CD8-positive, alpha-beta T cell (primary cell): ENCODE measurements at regions of chr1 and their contacts with region 1.

Region 1: DNA sequence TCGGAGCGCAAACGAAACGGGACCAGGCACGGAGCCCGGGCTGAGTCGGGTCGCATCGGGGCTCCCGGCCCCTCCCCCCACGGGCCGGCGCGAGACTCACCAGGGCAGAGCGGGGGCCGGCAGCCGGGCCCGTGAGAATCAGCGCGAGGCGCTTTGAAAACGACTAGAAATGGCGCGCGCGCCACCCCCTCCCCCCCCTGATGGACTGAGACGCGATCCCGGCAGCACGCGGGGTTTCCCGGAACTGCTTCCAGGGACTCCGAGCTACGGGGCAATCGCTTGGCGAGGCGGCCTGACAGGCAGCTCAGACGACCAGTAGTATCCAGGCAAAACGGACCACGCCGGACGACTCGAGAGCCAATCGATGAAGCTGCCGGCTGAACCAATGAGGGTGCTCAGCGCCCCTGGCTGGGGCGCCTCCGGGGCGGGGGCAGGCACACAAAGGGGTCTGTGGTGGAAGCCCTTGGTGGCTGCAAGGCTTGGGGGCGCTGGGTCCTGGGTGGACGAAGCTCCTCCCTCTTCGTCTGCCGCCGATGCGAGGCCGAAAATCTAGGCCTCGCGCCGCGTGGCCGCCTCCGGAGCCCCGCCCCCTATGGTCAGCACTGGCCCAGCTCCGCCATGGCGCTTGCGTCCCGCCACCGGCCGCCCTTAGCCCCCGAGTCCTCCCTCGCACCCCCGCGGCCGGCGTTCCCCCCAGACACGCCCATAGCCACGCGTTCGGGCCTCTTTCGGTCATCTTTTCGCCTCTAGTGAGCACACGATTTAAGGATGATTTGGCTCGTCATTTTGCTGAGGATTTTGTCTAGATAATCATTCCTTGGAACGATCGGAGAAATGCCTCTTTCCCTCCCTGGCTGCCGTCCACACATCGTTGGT is at the start of gene HNRNPR:
- DNase-seq: peak; percentile 97 to 100 (median 99)
- ATAC-seq: peak; percentile 96
- H3K4me3 ChIP-seq: peak within 1 kb of the TSS; percentile 70 to 93
- H3K4me3 Mint-ChIP-seq: peak within 1 kb of the TSS; percentile 94
- H3K27ac ChIP-seq: peak within 1 kb of the TSS; percentile 66 to 78
- H3K27ac Mint-ChIP-seq: peak within 1 kb of the TSS; percentile 96
- H3K4me1 ChIP-seq: peaks cover 31% of the 10 kb centered on the region
- H3K4me1 Mint-ChIP-seq: peaks cover 42% of the 10 kb centered on the region
- H3K27me3 ChIP-seq: no peaks in the 10 kb centered on the region
- H3K27me3 Mint-ChIP-seq: no peaks in the 10 kb centered on the region
- CTCF ChIP-seq: no peak
- total RNA-seq, gene HNRNPR: 102 to 103 TPM

Region 2: DNA sequence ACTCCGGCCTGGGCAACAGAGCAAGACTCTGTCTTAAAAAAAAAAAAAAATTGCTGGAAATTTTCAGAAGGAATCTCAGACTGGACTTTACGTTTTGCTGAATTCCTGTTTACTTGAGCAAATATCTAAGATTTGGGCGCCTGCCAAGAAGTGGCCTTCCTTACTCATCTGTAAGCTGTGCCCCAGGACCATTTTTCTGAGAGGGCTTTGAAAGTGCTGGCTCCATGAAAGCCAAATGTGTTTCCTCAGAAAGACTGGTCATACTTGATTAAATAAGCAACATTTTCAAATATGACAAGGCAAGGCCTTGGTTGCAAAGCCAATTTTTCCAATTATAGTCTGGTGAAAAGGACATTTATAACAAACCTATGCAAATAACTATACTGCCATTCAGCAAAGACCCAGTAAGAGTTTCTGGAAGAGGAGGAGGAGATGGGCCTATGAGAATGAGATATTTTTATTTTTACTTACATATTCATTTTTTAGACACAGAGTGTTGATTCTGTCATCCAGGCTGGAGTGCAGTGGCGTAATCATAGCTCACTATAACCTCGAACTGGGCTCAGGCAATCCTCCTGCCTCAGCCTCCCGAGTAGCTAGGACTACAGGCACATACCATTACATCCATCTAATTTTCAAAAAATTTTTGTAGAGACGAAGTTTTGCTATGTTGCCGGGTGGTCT is 70.8 kb before region 1 on chr1:
- CTCF ChIA-PET with region 1: no interaction called
- POLR2A ChIA-PET with region 1: no interaction called
- intact Hi-C with region 1: no loop called
- DNase-seq: no peak
- ATAC-seq: no peak
- H3K4me3 ChIP-seq: no peak overlapping the region
- H3K4me3 Mint-ChIP-seq: no peak overlapping the region
- H3K27ac ChIP-seq: no peak overlapping the region
- H3K27ac Mint-ChIP-seq: no peak overlapping the region
- H3K4me1 ChIP-seq: no peaks in the 10 kb centered on the region
- H3K4me1 Mint-ChIP-seq: no peaks in the 10 kb centered on the region
- H3K27me3 ChIP-seq: peaks cover 4 to 11% of the 10 kb centered on the region in 2 experiments
- H3K27me3 Mint-ChIP-seq: peaks cover 32% of the 10 kb centered on the region
- CTCF ChIP-seq: no peak

Region 3: GRCh38 chr1:23330846-23331245 is 13.5 kb before region 1 on chr1:
- CTCF ChIA-PET with region 1: interaction called, 3 read pairs
- POLR2A ChIA-PET with region 1: interaction called, 12 read pairs
- intact Hi-C with region 1: no loop called
- DNase-seq: no peak
- ATAC-seq: no peak
- H3K4me3 ChIP-seq: no peak overlapping the region
- H3K4me3 Mint-ChIP-seq: no peak overlapping the region
- H3K27ac ChIP-seq: no peak overlapping the region
- H3K27ac Mint-ChIP-seq: peak overlapping the region; percentile 21
- H3K4me1 ChIP-seq: no peaks in the 10 kb centered on the region
- H3K4me1 Mint-ChIP-seq: peaks cover 34% of the 10 kb centered on the region
- H3K27me3 ChIP-seq: no peaks in the 10 kb centered on the region
- H3K27me3 Mint-ChIP-seq: no peaks in the 10 kb centered on the region
- CTCF ChIP-seq: no peak

Region 4: DNA sequence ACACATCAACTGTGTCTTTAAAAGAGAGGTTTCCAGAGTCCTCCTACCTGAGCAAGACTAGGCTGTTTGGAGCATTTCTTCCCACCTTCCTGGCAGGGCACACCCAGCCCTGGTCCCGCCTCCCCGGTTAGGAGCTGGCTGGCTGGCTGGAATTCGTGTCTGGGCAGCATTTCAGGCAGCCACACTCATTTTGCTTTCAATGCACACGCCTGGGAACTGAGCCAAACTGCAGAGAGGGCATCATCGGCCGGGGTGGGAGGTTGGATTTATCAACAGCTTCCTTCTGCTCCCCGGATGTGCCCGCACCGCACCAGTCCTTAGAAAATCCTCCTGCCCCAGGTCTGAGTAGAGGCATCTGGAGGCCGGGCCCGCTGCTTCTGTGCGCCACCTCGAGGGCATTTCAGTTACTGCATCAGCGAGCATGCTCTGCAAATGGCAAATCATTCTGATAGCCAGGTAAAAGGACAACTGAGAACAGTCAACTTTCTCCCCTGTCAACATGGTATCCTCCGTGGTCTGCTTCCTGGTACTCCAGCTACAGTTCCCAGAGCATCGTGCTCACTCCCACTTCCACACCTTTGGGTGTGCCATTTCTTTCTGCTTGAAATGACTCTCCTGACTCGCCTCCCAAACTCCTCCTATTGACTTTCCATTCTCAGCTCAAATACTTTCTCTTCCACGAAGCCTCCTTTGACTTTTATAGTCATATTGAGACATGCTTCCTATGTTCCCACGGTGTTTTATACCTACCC is 59.6 kb after region 1 on chr1:
- CTCF ChIA-PET with region 1: interaction called, 6 read pairs
- POLR2A ChIA-PET with region 1: no interaction called
- intact Hi-C with region 1: loop called (anchors 1 to 5 kb)
- DNase-seq: peak; percentile 69 to 88 (median 78)
- ATAC-seq: peak; percentile 100
- H3K4me3 ChIP-seq: no peak overlapping the region
- H3K4me3 Mint-ChIP-seq: no peak overlapping the region
- H3K27ac ChIP-seq: no peak overlapping the region
- H3K27ac Mint-ChIP-seq: no peak overlapping the region
- H3K4me1 ChIP-seq: peaks cover 4% of the 10 kb centered on the region
- H3K4me1 Mint-ChIP-seq: peaks cover 9% of the 10 kb centered on the region
- H3K27me3 ChIP-seq: no peaks in the 10 kb centered on the region
- H3K27me3 Mint-ChIP-seq: no peaks in the 10 kb centered on the region
- CTCF ChIP-seq: peak; percentile 87

Region 5: DNA sequence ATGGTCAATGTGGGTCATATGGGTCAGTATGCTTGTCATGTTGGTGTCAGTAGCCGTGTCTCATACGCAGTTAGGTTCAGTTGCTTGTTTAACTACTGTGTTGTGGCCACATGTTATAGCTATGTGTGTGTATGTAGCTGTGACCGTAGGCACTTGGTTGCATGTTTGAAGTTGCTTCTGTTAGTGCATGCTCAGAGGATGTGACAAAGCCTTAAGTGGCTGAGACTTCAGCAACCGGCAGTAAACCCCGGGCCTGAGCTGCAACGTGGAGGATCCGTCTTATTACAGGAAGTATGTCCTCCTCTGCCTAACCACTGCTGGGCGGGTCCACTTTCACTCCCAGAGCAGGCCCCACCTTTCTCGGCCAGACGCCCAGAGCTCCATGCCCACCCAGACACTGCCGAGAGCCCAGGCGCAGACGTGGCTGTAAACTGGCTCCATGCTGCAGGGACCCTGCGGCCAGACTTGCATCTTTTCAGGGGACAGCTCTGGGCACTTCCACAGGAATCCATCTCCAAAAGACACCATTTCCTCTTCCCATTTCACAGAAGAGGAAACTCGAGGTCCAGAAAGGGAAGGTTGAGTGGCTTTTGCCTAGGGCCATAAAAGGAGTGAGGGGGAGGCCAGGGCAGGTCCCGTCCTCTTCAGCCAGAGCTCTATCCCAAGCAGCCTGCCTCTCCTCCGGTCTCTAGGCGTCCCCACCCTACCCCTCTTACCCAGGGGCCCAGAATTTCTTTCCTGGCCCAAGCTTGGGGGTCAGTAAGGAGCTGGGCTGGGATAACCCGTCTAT is 78.1 kb after region 1 on chr1:
- CTCF ChIA-PET with region 1: no interaction called
- POLR2A ChIA-PET with region 1: interaction called, 12 read pairs
- intact Hi-C with region 1: no loop called
- DNase-seq: peak in 8 of 9 experiments; percentile 37 to 80 (median 55)
- ATAC-seq: peak; percentile 77
- H3K4me3 ChIP-seq: peak overlapping the region in 1 of 2 experiments; percentile 21
- H3K4me3 Mint-ChIP-seq: peak overlapping the region; percentile 89
- H3K27ac ChIP-seq: peak overlapping the region in 1 of 2 experiments; percentile 43
- H3K27ac Mint-ChIP-seq: peak overlapping the region; percentile 76
- H3K4me1 ChIP-seq: peaks cover 32% of the 10 kb centered on the region
- H3K4me1 Mint-ChIP-seq: peaks cover 36% of the 10 kb centered on the region
- H3K27me3 ChIP-seq: no peaks in the 10 kb centered on the region
- H3K27me3 Mint-ChIP-seq: peaks cover 3% of the 10 kb centered on the region
- CTCF ChIP-seq: no peak

Region 6: GRCh38 chr1:23530747-23531561 is 186.6 kb after region 1 on chr1 and contains the start of gene E2F2:
- CTCF ChIA-PET with region 1: interaction called, 3 read pairs
- POLR2A ChIA-PET with region 1: interaction called, 5 read pairs
- intact Hi-C with region 1: loop called (anchors 2 to 10 kb)
- DNase-seq: peak; percentile 56 to 91 (median 82)
- ATAC-seq: peak; percentile 71
- H3K4me3 ChIP-seq: peak within 1 kb of the TSS; percentile 42 to 52
- H3K4me3 Mint-ChIP-seq: peak within 1 kb of the TSS; percentile 85
- H3K27ac ChIP-seq: peak within 1 kb of the TSS in 1 of 2 experiments; percentile 72
- H3K27ac Mint-ChIP-seq: peak within 1 kb of the TSS; percentile 13
- H3K4me1 ChIP-seq: peaks cover 60% of the 10 kb centered on the region
- H3K4me1 Mint-ChIP-seq: peaks cover 63% of the 10 kb centered on the region
- H3K27me3 ChIP-seq: no peaks in the 10 kb centered on the region
- H3K27me3 Mint-ChIP-seq: no peaks in the 10 kb centered on the region
- CTCF ChIP-seq: no peak
- total RNA-seq, gene E2F2: 0.19 to 0.38 TPM

Region 7: GRCh38 chr1:23699280-23700179 is 355.2 kb after region 1 on chr1:
- CTCF ChIA-PET with region 1: no interaction called
- POLR2A ChIA-PET with region 1: no interaction called
- intact Hi-C with region 1: no loop called
- DNase-seq: no peak
- ATAC-seq: no peak
- H3K4me3 ChIP-seq: no peak overlapping the region
- H3K4me3 Mint-ChIP-seq: no peak overlapping the region
- H3K27ac ChIP-seq: no peak overlapping the region
- H3K27ac Mint-ChIP-seq: no peak overlapping the region
- H3K4me1 ChIP-seq: peaks cover 25% of the 10 kb centered on the region
- H3K4me1 Mint-ChIP-seq: peaks cover 55% of the 10 kb centered on the region
- H3K27me3 ChIP-seq: no peaks in the 10 kb centered on the region
- H3K27me3 Mint-ChIP-seq: no peaks in the 10 kb centered on the region
- CTCF ChIP-seq: no peak

Region 8: GRCh38 chr1:24888971-24889676 is 1544.8 kb after region 1 on chr1:
- CTCF ChIA-PET with region 1: no interaction called
- POLR2A ChIA-PET with region 1: no interaction called
- intact Hi-C with region 1: no loop called
- DNase-seq: peak in 1 of 9 experiments; percentile 21
- ATAC-seq: no peak
- H3K4me3 ChIP-seq: no peak overlapping the region
- H3K4me3 Mint-ChIP-seq: no peak overlapping the region
- H3K27ac ChIP-seq: no peak overlapping the region
- H3K27ac Mint-ChIP-seq: no peak overlapping the region
- H3K4me1 ChIP-seq: no peaks in the 10 kb centered on the region
- H3K4me1 Mint-ChIP-seq: no peaks in the 10 kb centered on the region
- H3K27me3 ChIP-seq: no peaks in the 10 kb centered on the region
- H3K27me3 Mint-ChIP-seq: no peaks in the 10 kb centered on the region
- CTCF ChIP-seq: no peak